Aorta (tissue), 5 donors: ENCODE measurements at regions of chrX and their contacts with region 1.

Region 1: GRCh38 chrX:109384699-109385098 is 97.2 kb downstream of the GUCY2F start:
- DNase-seq: no peak
- ATAC-seq: no peak
- H3K4me3 ChIP-seq: no peak overlapping the region
- H3K27ac ChIP-seq: no peak overlapping the region
- H3K4me1 ChIP-seq: no peaks in the 10 kb centered on the region
- H3K27me3 ChIP-seq: no peaks in the 10 kb centered on the region

Region 2: GRCh38 chrX:108699368-108699767 is 685.3 kb before region 1 on chrX:
- intact Hi-C with region 1: loop called in 1 of 2 experiments (anchors 10 kb)
- DNase-seq: no peak
- ATAC-seq: no peak
- H3K4me3 ChIP-seq: no peak overlapping the region
- H3K27ac ChIP-seq: no peak overlapping the region
- H3K4me1 ChIP-seq: peaks cover 0 to 3% of the 10 kb centered on the region in 2 donors
- H3K27me3 ChIP-seq: no peaks in the 10 kb centered on the region